ENCODE measurements at regions of chr2 and their contacts with region 1.

Region 1: DNA sequence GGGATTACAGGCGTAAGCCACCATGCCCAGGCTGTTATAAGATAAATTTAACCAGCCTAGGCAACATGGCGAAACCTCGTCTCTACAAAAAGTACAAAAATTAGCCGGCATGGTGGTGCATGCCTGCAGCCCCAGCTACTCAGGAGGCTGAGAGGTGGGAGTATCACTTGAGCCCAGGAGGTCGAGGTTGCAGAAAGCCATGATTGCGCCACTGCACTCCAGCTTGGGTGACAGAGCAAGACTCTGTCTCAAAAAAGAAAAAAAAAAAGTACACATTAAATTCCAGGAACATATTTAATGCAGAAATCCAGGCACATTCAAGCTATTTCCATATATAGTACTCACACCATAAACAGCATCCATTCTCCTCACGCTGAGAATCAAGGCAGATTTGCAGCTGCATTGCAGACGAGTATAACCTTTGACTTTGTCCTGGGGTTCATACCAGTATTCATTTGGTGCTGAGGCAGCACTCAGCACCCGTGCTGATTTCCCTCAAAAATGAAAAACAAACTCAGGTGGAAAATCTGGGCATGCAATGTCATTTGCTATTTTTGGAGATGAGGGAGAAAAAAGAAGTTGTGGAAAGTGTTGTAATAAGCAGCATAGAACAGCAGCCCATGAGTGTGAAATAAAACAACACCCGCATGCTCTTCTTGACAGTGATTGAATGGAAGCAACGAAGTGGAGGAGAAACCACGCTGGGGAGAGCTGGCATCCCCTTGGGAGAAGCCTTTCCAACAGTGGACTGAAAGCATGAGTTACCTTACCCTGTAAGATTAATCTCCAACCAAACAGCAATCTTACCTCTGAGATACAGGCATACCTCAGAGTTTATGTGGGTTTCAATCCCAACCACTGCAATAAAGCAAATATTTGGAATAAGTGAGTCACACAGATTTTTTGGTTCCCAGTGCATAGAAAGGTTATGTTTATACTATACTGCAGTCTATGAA is 46.8 kb upstream of the ANXA4 start:
- DNase-seq: peak; percentile 68
- ATAC-seq: peak; percentile 88
- H3K4me3 ChIP-seq: peak overlapping the region in 1 of 2 experiments; percentile 10; a peak in 2 of 4 replicates
- H3K27ac ChIP-seq: peak overlapping the region; percentile 77
- H3K4me1 ChIP-seq: peaks cover 36% of the 10 kb centered on the region
- H3K27me3 ChIP-seq: no peaks in the 10 kb centered on the region
- CTCF ChIP-seq: no peak

Region 2: GRCh38 chr2:69177785-69178636 is 517.2 kb before region 1 on chr2:
- CTCF ChIA-PET with region 1: no interaction called
- POLR2A ChIA-PET with region 1: no interaction called
- in situ Hi-C with region 1: no loop called
- intact Hi-C with region 1: no loop called
- DNase-seq: no peak
- ATAC-seq: peak; percentile 69
- H3K4me3 ChIP-seq: no peak overlapping the region
- H3K27ac ChIP-seq: peak overlapping the region; percentile 56
- H3K4me1 ChIP-seq: peaks cover 3% of the 10 kb centered on the region
- H3K27me3 ChIP-seq: no peaks in the 10 kb centered on the region
- CTCF ChIP-seq: no peak

Region 3: GRCh38 chr2:69652221-69652651 is 42.9 kb before region 1 on chr2:
- CTCF ChIA-PET with region 1: no interaction called
- POLR2A ChIA-PET with region 1: no interaction called
- in situ Hi-C with region 1: no loop called
- intact Hi-C with region 1: no loop called
- DNase-seq: no peak
- ATAC-seq: peak; percentile 71; the same call in 1 of the 2 replicates
- H3K4me3 ChIP-seq: no peak overlapping the region
- H3K27ac ChIP-seq: peak overlapping the region; percentile 18; the same call in 1 of the 2 replicates
- H3K4me1 ChIP-seq: 0 out of 2 replicates have a peak, but pooled peaks cover 6% of the 10 kb centered on the region
- H3K27me3 ChIP-seq: no peaks in the 10 kb centered on the region
- CTCF ChIP-seq: no peak

Region 4: GRCh38 chr2:69741619-69742466 is 46.7 kb after region 1 on chr2 and contains the start of gene ANXA4:
- CTCF ChIA-PET with region 1: no interaction called
- POLR2A ChIA-PET with region 1: interaction called, 10 read pairs
- in situ Hi-C with region 1: no loop called
- intact Hi-C with region 1: no loop called
- DNase-seq: peak; percentile 41
- ATAC-seq: peak; percentile 98
- H3K4me3 ChIP-seq: peak within 1 kb of the TSS; percentile 82 to 95
- H3K27ac ChIP-seq: peak within 1 kb of the TSS; percentile 98
- H3K4me1 ChIP-seq: peaks cover 29% of the 10 kb centered on the region
- H3K27me3 ChIP-seq: no peaks in the 10 kb centered on the region
- CTCF ChIP-seq: no peak
- total RNA-seq, gene ANXA4: 183 TPM

Measured in Panc1 (cell line).